ENCODE measurements at regions of chr1 and their contacts with region 1.

Region 1: GRCh38 chr1:21255278-21255942 is 34.9 kb downstream of the ECE1 start:
- DNase-seq: no peak
- H3K4me3 ChIP-seq: no peak overlapping the region
- H3K27me3 ChIP-seq: no peaks in the 10 kb centered on the region
- CTCF ChIP-seq: peak; percentile 87

Region 2: DNA sequence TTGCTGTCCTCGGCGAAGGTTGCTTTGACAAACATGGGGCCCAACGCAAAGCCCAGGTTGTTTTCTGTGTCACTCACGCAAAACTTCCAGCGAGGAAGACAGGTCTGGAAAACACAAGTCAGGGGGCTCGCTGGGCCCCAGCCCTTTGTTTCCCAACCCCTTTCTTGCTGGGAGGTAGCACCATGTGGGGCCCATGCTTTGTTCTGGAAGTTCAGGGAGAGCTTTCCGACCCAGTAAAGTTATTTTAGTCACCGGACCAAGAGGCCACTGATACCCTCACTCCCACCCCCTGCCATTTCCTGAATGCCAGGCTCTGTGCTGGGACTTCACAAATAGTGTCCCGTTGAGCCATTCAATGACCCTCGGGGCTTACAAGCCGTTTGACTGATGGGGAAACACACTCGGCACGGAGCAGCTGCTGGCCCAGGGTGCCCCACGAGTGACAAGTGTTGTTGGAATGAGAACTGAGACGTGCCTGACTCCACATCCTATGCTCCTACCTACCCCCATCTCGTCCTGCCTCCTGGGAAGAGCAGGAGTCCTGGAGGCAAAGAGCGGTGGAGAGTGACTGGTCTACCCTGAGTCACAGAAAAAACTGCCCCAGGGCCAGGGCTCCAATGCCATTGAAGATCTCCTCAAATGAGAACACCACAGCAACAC is 17.1 kb before region 1 on chr1:
- CTCF ChIA-PET with region 1: interaction called, 64 read pairs
- POLR2A ChIA-PET with region 1: no interaction called
- DNase-seq: peak; percentile 76
- H3K4me3 ChIP-seq: no peak overlapping the region
- H3K27me3 ChIP-seq: no peaks in the 10 kb centered on the region
- CTCF ChIP-seq: no peak

Region 3: GRCh38 chr1:21270086-21270689 is 14.8 kb after region 1 on chr1:
- CTCF ChIA-PET with region 1: interaction called, 45 read pairs
- POLR2A ChIA-PET with region 1: no interaction called
- DNase-seq: no peak
- H3K4me3 ChIP-seq: no peak overlapping the region
- H3K27me3 ChIP-seq: no peaks in the 10 kb centered on the region
- CTCF ChIP-seq: peak; percentile 96

Region 4: GRCh38 chr1:21313203-21313885 is 57.9 kb after region 1 on chr1:
- CTCF ChIA-PET with region 1: interaction called, 14 read pairs
- POLR2A ChIA-PET with region 1: no interaction called
- DNase-seq: peak; percentile 67
- H3K4me3 ChIP-seq: no peak overlapping the region
- H3K27me3 ChIP-seq: no peaks in the 10 kb centered on the region
- CTCF ChIP-seq: no peak

Region 5: GRCh38 chr1:21334214-21335087 is 79.0 kb after region 1 on chr1:
- CTCF ChIA-PET with region 1: interaction called, 47 read pairs
- POLR2A ChIA-PET with region 1: no interaction called
- DNase-seq: peak; percentile 66
- H3K4me3 ChIP-seq: peak overlapping the region; percentile 7; the same call in 1 of the 2 replicates
- H3K27me3 ChIP-seq: no peaks in the 10 kb centered on the region
- CTCF ChIP-seq: peak; percentile 96

Region 6: DNA sequence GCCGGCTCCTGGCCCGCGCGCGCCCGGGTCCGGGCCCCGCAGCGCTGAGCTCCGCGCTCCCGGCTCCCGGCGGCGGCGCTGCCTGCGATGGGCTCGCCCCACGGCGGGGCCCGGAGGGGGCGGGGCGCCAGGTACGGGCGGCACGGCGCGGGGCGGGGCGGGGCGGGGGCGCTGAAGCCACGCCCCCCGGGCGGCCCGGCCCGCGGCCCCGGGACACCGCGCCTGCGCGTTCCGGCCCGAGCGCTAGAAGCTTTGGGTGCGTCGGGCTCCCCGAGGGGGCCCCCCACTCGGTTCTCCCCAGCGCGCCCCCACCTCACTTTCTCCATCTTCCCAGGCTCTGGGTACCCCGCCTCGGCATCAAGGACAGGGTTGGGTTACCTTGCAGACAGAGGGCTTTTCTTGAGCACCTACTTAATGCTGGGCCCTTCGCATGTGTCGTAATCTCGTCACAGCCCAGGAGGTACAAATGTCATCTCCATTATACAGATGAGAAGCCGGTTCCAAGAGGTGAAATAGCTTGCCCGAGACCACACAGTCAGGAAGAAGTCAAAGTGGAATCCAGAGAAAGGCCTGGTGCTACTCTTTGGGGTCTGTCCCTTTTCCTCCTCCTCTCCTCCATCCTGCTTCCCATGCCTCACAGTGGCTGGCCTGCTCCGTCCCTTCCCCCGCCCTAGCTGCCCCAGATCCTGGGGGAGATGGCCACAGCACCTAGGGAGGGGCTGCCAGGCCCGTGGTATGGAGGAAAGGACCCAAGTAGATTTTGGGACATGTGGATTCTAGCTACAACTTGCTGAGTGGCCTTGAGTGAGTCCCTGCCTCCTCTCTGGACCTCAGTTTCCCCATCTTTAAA is 367.3 kb after region 1 on chr1:
- CTCF ChIA-PET with region 1: no interaction called
- POLR2A ChIA-PET with region 1: no interaction called
- DNase-seq: no peak
- H3K4me3 ChIP-seq: peak overlapping the region; percentile 25
- H3K27me3 ChIP-seq: peaks cover 12% of the 10 kb centered on the region; the same call in 1 of the 2 replicates
- CTCF ChIP-seq: no peak

Measured in BJ (cell line).